Activated naive CD4-positive, alpha-beta T cell treated with anti-CD3 and anti-CD28 coated beads for 36 hours (primary cell): ENCODE measurements at regions of chr9 and their contacts with region 1.

Region 1: DNA sequence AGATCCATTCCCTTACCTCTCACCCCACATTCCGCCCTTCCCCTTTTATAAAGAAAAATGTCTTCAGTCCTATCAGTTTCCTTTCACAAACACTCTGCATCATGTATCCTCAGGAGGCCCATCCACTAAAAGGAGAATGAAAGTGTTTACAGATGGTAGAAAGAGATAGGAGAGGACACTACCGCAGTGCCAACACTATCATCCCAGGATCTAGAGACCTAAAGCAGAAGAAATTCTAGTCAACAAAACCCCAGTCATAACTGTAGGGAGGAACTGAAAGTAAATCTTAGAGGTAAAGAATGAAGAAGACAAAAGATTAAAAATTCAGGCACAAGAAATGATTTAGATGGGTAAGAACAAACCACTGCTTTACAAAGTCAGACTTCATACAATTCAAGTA is 114.1 kb downstream of the MLLT3 start:
- DNase-seq: no peak
- H3K4me3 Mint-ChIP-seq: peak overlapping the region; percentile 40
- H3K27ac Mint-ChIP-seq: peak overlapping the region; percentile 13
- H3K4me1 Mint-ChIP-seq: peaks cover 80% of the 10 kb centered on the region
- H3K27me3 Mint-ChIP-seq: no peaks in the 10 kb centered on the region

Region 2: DNA sequence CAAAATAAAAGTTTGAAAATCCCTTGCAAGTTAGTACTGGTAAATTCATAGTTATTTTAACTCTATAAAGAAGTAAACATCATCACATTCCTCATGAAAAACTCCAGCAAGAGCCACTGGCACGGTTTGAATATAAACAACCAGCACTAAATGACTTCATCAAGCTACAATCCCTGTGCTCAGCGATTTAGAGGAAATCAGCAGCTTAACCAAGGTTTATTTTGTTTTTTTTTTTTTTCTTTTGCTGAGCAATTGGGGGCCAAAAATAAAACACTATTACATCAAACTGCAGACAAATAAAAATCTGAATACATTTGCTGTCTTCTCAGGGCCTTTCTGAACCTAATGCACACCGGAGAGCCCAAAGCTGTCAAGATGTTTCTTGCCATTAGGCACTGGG is 613.2 kb before region 1 on chr9:
- CTCF ChIA-PET with region 1: no interaction called
- intact Hi-C with region 1: no loop called
- DNase-seq: no peak
- H3K4me3 Mint-ChIP-seq: no peak overlapping the region
- H3K27ac Mint-ChIP-seq: no peak overlapping the region
- H3K4me1 Mint-ChIP-seq: no peaks in the 10 kb centered on the region
- H3K27me3 Mint-ChIP-seq: no peaks in the 10 kb centered on the region

Region 3: GRCh38 chr9:20479419-20480155 is 28.7 kb before region 1 on chr9:
- CTCF ChIA-PET with region 1: no interaction called
- intact Hi-C with region 1: loop called (anchors 1 kb)
- DNase-seq: no peak
- H3K4me3 Mint-ChIP-seq: no peak overlapping the region
- H3K27ac Mint-ChIP-seq: no peak overlapping the region
- H3K4me1 Mint-ChIP-seq: peaks cover 57% of the 10 kb centered on the region
- H3K27me3 Mint-ChIP-seq: no peaks in the 10 kb centered on the region

Region 4: GRCh38 chr9:21812946-21813568 is 1304.8 kb after region 1 on chr9:
- CTCF ChIA-PET with region 1: no interaction called
- intact Hi-C with region 1: no loop called
- DNase-seq: peak; percentile 76
- H3K4me3 Mint-ChIP-seq: no peak overlapping the region
- H3K27ac Mint-ChIP-seq: no peak overlapping the region
- H3K4me1 Mint-ChIP-seq: peaks cover 56% of the 10 kb centered on the region
- H3K27me3 Mint-ChIP-seq: no peaks in the 10 kb centered on the region